BJ (cell line): ENCODE measurements at regions of chr9 and their contacts with region 1.

Region 1: DNA sequence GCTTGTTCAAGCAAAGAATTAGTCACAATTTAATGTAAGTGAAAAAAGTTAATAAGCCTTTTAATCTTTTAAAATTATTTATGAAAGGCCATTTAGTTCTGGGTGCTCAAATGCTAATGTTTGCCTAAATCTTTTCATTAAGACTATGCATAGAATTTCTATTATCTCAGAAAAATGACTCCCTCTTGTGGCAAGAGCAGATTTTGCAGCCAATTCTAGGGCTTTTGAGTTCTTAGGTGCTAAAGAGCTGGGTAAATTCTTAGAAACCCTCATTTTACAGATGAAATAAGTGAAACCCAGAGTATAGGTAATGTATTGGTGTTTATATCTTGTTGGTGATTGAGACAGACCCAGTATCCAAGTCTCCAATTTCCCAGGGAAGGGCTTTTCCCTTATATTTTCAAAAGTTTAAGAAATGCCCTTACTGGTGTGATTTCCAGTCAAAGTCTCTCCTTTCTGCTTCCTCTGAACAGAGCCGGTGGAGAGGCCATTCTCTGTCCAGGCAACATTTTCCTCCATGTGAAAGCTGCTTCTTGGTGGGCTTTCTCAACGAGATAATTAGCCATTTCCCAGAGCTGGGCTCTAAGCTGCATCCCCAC is 24.1 kb upstream of the PCSK5 start:
- DNase-seq: no peak
- H3K4me3 ChIP-seq: no peak overlapping the region
- H3K27me3 ChIP-seq: no peaks in the 10 kb centered on the region
- CTCF ChIP-seq: peak; percentile 73

Region 2: GRCh38 chr9:75683591-75683990 is 182.8 kb before region 1 on chr9:
- CTCF ChIA-PET with region 1: no interaction called
- POLR2A ChIA-PET with region 1: no interaction called
- DNase-seq: no peak
- H3K4me3 ChIP-seq: no peak overlapping the region
- H3K27me3 ChIP-seq: no peaks in the 10 kb centered on the region
- CTCF ChIP-seq: no peak

Region 3: DNA sequence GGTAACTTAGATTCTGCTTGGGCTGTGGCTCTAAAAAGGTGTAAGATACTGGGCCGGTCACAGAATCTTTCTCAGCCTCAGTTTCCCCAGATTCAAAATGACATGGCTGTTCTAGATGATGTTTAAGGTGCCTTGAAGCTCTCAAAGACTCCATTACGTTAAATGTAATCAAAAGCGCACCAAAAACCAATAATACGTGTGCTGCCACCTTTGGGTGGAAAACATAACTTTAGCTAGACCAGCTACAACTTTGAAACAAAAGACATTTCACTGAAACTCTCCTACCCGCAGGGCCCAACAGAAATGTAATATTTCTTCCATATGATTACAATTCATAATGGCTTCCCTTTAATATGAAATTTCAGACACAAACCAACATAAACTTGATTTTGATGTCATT is 10.9 kb before region 1 on chr9:
- CTCF ChIA-PET with region 1: interaction called, 11 read pairs
- POLR2A ChIA-PET with region 1: no interaction called
- DNase-seq: no peak
- H3K4me3 ChIP-seq: no peak overlapping the region
- H3K27me3 ChIP-seq: no peaks in the 10 kb centered on the region
- CTCF ChIP-seq: peak; percentile 20; the same call in 1 of the 2 replicates

Region 4: GRCh38 chr9:75876999-75877640 is 10.7 kb after region 1 on chr9:
- CTCF ChIA-PET with region 1: interaction called, 22 read pairs
- POLR2A ChIA-PET with region 1: interaction called, 5 read pairs
- DNase-seq: no peak
- H3K4me3 ChIP-seq: no peak overlapping the region
- H3K27me3 ChIP-seq: no peaks in the 10 kb centered on the region
- CTCF ChIP-seq: no peak